AG04449 (cell line): ENCODE measurements at regions of chr7 and their contacts with region 1.

Region 1: DNA sequence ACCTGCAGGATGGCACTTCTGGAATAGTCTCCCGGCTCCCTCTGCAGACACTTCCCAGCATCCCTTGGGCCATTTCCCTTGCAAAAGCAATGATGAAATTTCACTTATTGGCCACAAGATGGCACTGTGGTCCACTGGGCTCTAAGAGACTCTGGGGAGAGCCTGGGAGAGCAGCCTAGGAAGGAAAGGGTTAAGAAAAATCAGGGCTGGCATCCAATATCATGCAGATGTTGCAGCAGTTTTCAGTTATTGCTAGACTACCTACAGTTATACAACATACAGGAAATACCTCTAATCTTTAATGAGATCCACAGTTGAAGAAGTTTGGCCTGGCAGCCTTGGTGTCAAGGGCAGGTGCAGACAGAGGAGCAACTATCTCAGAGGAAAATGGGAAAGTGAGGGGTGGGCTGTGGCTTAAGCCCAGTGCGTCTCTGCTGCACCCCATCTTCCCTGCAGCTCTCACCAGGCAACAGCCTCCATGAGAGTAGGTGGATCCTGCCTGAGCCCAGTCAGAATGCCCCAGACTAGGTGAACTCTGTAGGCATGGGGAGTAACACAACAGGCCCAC is 100.2 kb upstream of the PRSS58 start:
- DNase-seq: peak; percentile 36
- H3K4me3 ChIP-seq: no peak overlapping the region
- CTCF ChIP-seq: peak; percentile 80

Region 2: DNA sequence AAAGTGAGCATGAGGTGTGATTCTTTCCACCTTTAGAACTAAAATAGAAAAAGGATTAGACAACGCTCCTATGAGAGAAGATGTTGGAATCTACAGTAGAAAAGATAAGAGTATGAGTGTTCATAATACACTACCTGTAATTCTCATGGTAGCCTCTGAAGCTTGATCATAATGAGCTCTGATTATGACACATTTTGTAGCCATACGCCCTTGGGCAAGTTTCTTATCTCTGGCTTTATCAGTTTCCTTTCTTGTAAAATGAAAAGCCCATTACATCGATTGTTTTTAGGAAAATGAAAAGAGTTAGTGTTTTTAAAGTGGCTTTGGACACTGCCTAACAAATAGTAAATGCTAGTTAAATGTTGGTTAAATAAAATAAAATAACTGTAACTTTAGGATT is 77.8 kb before region 1 on chr7:
- CTCF ChIA-PET with region 1: no interaction called
- POLR2A ChIA-PET with region 1: no interaction called
- DNase-seq: no peak
- H3K4me3 ChIP-seq: no peak overlapping the region
- CTCF ChIP-seq: no peak

Region 3: GRCh38 chr7:142331941-142332340 is 26.1 kb before region 1 on chr7:
- CTCF ChIA-PET with region 1: no interaction called
- POLR2A ChIA-PET with region 1: no interaction called
- DNase-seq: no peak
- H3K4me3 ChIP-seq: no peak overlapping the region
- CTCF ChIP-seq: no peak

Region 4: DNA sequence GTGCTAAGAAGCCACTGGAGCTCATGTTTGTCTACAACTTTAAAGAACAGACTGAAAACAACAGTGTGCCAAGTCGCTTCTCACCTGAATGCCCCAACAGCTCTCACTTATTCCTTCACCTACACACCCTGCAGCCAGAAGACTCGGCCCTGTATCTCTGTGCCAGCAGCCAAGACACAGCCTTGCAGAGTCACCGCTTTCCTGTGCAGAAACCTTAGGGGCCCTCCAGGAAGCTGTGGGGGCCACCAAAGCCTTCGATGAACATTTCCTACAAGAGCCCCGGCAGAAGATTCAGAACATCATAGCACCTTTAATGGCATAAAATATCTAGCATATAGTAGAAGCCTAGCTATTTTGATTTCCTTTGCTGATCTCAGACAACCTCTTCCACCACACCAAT is 12.2 kb before region 1 on chr7:
- CTCF ChIA-PET with region 1: interaction called, 14 read pairs
- POLR2A ChIA-PET with region 1: no interaction called
- DNase-seq: no peak
- H3K4me3 ChIP-seq: no peak overlapping the region
- CTCF ChIP-seq: no peak

Region 5: GRCh38 chr7:142375666-142376313 is 17.8 kb after region 1 on chr7:
- CTCF ChIA-PET with region 1: interaction called, 57 read pairs
- POLR2A ChIA-PET with region 1: interaction called, 3 read pairs
- DNase-seq: no peak
- H3K4me3 ChIP-seq: no peak overlapping the region
- CTCF ChIP-seq: peak; percentile 48